ENCODE measurements at regions of chr10 and their contacts with region 1.

Region 1: DNA sequence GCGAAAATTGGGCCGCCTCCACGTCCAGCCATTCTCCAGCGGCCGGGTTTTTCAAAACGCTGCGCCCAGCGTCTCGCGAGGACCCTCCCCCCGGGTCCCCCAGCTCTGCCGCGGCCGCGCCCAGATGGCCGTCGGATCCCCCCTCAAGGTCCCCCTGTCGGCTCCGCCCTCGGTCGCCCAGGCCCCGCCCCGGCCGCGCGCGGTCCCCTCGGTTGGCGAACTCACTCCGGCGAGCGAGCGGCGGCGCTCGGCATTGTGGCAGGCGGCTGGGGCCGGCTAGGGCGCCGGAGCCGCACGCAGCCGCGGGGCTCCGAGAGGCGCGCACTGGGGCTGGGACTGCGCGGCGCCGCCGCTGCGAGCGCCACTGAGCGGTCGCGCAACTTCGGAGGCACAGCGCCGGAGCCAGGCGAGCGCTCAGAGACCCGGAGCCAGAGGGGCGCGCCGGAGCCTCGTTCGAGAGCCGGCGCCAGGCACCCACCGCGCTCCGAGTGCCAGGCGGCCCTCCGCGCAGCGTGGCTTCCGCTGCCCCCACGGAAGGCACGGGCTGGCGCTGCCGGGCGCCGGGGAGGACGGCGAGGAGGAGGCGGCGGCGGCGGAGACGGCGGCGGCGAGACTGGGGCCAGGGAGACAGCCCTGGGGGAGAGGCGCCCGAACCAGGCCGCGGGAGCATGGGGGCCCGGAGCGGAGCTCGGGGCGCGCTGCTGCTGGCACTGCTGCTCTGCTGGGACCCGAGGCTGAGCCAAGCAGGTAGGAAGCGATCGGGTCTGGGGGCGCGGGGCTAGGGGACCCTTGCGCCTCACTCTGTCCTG is at the start of gene UNC5B:
- DNase-seq: peak; percentile 87 to 93
- H3K4me3 ChIP-seq: peak within 1 kb of the TSS; percentile 46 to 65
- H3K27ac ChIP-seq: peak within 1 kb of the TSS; percentile 79 to 90
- H3K4me1 ChIP-seq: no peaks in the 10 kb centered on the region
- H3K27me3 ChIP-seq: no peaks in the 10 kb centered on the region
- CTCF ChIP-seq: peak; percentile 20 to 73 (median 44)
- POLR2A ChIP-seq: peak; percentile 89 to 97
- total RNA-seq, gene UNC5B: 5.3 to 26.6 (median 17.7) TPM

Region 2: DNA sequence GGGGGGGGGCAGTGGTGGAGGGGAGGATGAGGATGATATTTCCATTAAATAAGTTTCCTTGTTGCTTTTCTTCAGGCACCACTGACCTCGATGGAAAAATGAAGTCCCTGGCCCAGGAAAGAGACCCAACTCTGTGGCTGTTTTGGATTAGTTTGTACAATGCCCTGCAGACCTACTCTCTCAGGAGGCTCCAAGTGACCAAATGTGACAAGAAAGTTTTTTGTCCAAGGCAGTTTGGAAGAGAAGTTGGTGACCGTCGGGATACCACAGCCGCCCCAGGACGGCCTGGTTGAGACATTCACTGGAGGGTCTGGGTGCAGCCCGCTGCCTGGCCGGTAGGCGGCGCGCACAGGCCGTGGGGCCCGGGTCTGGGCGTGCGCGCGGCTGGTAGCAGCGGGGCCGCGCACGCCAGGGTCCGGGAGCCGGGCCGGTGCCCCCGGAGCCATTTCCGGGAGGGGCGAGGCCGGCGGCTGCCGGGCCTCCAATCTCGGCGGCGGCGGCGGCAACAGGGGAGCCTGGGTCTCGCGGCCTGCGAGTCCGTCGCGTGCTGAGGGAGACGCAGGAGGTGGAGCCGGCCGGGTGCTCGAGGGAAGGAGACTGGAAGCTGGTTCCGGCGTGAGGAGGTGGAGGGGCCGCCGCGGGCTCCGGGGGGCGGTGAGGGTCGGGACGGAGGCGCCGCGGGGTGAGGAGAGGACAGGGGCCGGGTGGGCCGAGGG is 396.9 kb before region 1 on chr10 and contains the start of gene SGPL1:
- intact Hi-C with region 1: no loop called
- DNase-seq: peak; percentile 80 to 87
- H3K4me3 ChIP-seq: peak within 1 kb of the TSS; percentile 56 to 87
- H3K27ac ChIP-seq: peak within 1 kb of the TSS; percentile 90 to 97
- H3K4me1 ChIP-seq: peaks cover 0 to 6% of the 10 kb centered on the region in 2 donors
- H3K27me3 ChIP-seq: no peaks in the 10 kb centered on the region
- CTCF ChIP-seq: peak; percentile 90 to 100 (median 100)
- POLR2A ChIP-seq: peak; percentile 44 to 77
- total RNA-seq, gene SGPL1: 13.3 to 59.7 (median 27.3) TPM

Region 3: DNA sequence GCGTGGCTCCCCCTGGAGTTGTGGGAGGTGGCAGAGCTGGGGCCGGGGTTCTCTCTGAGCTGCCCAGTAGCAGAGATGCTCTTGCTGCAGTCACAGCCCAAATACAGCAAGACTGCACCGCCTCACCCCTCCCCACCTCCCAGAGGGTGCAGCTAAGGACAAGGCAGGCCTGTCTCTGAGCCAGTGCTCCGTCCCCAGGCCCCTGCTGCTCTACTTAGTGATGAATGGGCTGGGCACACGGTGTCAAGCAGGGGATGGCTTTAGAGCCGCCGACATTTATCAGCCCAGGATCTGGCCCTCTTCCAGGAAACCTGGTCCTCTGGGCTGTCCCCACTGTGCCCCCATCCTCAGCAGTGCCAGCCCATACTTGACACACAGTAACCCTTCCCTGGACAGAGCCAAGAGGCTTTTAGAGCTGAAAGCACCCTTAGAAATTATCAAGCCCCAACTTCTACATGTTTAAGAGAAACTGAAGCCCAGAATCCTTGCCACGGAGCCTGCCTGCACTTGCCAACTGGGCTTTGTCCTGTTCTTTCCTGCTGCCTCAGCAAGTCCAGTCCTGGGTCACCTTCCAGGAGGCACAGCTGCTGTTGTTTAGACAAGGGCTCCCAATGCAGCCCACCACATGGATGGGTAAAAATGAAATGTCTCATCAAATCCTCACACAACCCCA is 137.3 kb before region 1 on chr10:
- intact Hi-C with region 1: no loop called
- DNase-seq: peak; percentile 8 to 11
- H3K4me3 ChIP-seq: no peak overlapping the region
- H3K27ac ChIP-seq: no peak overlapping the region
- H3K4me1 ChIP-seq: no peaks in the 10 kb centered on the region
- H3K27me3 ChIP-seq: no peaks in the 10 kb centered on the region
- CTCF ChIP-seq: no peak
- POLR2A ChIP-seq: no peak

Region 4: DNA sequence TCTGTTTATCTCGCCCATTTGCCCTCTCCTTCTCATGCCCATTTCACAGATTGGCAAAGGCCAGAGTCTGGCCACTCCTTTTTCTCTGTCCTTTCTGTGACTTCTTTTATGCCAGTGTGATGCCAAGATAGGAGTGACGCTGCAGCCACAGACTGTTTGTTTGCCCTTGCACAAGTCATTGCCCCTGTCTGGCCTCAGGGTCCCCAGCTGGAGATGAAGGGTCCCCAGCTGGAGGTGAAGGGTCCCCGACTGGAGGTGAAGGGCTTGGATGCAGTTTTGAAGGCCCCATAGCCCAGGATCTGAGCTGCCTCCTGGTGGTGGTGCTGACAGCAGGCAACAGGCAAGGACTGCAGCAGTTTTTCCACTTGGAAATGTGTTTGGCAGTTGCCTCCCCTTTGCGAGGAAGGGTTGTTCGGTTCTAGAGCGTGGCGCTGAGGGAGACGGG is 55.7 kb after region 1 on chr10:
- intact Hi-C with region 1: loop called (anchors 10 kb)
- DNase-seq: peak; percentile 51 to 52
- H3K4me3 ChIP-seq: no peak overlapping the region
- H3K27ac ChIP-seq: peak overlapping the region in 1 of 2 donors; percentile 78
- H3K4me1 ChIP-seq: no peaks in the 10 kb centered on the region
- H3K27me3 ChIP-seq: no peaks in the 10 kb centered on the region
- CTCF ChIP-seq: peak; percentile 24 to 56 (median 48)
- POLR2A ChIP-seq: no peak

Measured in uterus (tissue), 4 donors.